ENCODE measurements at regions of chr14 and their contacts with region 1.

Region 1: DNA sequence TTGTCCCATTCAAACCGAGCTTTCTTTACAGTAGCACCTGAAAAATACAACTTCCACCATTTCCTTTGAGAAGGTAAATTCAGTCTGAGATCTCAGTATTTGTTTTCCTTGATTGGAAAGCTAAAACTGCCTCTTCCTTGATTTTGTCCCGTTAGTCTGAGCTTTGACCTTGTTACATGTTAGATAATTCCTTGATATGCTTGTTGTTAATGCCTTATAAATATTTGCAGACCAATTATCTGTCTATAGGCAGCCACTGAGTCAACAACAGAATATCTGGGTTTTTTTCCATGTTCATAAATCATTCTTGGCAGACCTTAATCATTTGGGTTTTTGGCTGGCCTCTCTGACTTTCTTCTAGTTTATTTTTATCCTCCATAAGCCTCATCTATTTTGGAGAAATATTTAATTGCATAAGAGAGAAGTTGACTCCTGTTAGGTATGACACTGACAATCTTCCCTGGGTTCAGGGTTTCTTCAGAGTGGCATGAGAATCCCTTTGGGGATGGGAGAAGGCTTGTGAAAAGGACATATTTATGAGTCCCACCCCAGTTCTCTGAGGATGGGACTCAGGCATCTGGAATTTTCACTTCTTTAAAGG is 299.7 kb downstream of the NRXN3 start:
- DNase-seq: no peak
- ATAC-seq: no peak
- H3K4me3 ChIP-seq: no peak overlapping the region
- H3K4me1 ChIP-seq: no peaks in the 10 kb centered on the region
- CTCF ChIP-seq: no peak

Region 2: GRCh38 chr14:78509516-78509915 is 39.7 kb after region 1 on chr14:
- intact Hi-C with region 1: loop called in 1 of 2 experiments (anchors 2 kb)
- DNase-seq: no peak
- ATAC-seq: no peak
- H3K4me3 ChIP-seq: no peak overlapping the region
- H3K4me1 ChIP-seq: no peaks in the 10 kb centered on the region
- CTCF ChIP-seq: no peak

Measured in mucosa of descending colon (tissue), 3 donors.